ENCODE measurements at regions of chr19 and their contacts with region 1.

Region 1: DNA sequence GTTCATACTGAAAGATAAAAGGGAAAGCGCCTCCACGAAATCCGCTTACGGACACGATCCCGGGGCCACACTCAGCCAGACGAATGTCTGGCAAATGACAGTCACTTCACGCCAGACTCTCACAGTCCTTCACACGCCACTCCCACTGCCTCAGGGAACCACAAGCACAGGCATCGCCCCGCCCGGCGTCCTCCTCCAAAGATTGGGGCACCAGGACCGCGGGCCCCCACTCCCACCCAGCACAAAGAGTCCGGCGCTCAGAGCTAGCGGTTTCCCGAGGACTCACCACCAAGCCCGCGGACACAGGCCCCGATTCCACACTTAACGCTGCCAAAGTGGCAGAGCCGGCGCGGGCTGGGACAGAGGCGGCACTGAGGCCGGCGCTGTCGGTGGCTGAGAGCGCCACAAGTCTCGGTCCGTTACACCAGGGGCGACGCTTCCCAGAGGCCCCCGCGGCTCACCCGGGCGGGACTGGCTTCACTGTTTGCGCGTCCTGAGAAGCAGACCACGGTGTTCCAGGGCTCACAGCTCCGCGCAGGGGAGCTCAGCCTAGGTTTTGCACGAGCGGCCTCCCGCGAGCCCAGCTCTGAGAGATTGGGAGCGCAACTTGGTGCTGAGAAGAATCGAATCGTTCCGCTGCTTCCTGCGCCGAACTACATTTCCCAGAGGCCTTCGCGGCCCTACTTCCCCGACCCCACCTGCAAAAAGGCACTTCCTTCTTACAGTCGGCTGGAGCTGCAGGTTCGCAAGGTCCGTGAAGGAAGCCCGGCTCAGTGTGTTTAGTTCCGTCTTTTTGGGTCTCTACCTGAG is at the start of gene ZNF569:
- DNase-seq: peak; percentile 86 to 89
- ATAC-seq: peak; percentile 91 to 92
- H3K4me3 ChIP-seq: peak within 1 kb of the TSS; percentile 87 to 90 (median 88)
- H3K27ac ChIP-seq: peak within 1 kb of the TSS; percentile 84 to 92 (median 88)
- H3K4me1 ChIP-seq: peaks cover 14 to 16% of the 10 kb centered on the region in 2 donors
- H3K27me3 ChIP-seq: no peaks in the 10 kb centered on the region
- CTCF ChIP-seq: peak in 1 of 5 experiments; percentile 16
- POLR2A ChIP-seq: peak; percentile 20 to 28
- total RNA-seq, gene ZNF569: 3.4 to 9.2 (median 4.4) TPM

Region 2: GRCh38 chr19:36528194-36528920 is 938.6 kb before region 1 on chr19 and contains the start of gene ZNF260:
- in situ Hi-C with region 1: no loop called
- intact Hi-C with region 1: loop called (anchors 2 kb)
- DNase-seq: peak; percentile 96
- ATAC-seq: peak; percentile 99
- H3K4me3 ChIP-seq: peak within 1 kb of the TSS; percentile 71 to 83 (median 80)
- H3K27ac ChIP-seq: peak within 1 kb of the TSS; percentile 83 to 94 (median 90)
- H3K4me1 ChIP-seq: peaks cover 16 to 17% of the 10 kb centered on the region in 2 donors
- H3K27me3 ChIP-seq: no peaks in the 10 kb centered on the region
- CTCF ChIP-seq: no peak
- POLR2A ChIP-seq: peak; percentile 43 to 56
- total RNA-seq, gene ZNF260: 1.3 to 16.3 (median 3.2) TPM

Region 3: GRCh38 chr19:36850559-36851442 is 616.2 kb before region 1 on chr19 and contains the start of gene ZNF345:
- in situ Hi-C with region 1: no loop called
- intact Hi-C with region 1: loop called (anchors 1 kb)
- DNase-seq: peak; percentile 85 to 87
- ATAC-seq: peak; percentile 98 to 99
- H3K4me3 ChIP-seq: peak within 1 kb of the TSS; percentile 87 to 95 (median 92)
- H3K27ac ChIP-seq: peak within 1 kb of the TSS; percentile 87 to 98 (median 94)
- H3K4me1 ChIP-seq: peaks cover 11 to 14% of the 10 kb centered on the region in 2 donors
- H3K27me3 ChIP-seq: no peaks in the 10 kb centered on the region
- CTCF ChIP-seq: no peak
- POLR2A ChIP-seq: peak; percentile 22 to 25
- total RNA-seq, gene ZNF345: 0.36 to 3.9 (median 0.51) TPM

Region 4: DNA sequence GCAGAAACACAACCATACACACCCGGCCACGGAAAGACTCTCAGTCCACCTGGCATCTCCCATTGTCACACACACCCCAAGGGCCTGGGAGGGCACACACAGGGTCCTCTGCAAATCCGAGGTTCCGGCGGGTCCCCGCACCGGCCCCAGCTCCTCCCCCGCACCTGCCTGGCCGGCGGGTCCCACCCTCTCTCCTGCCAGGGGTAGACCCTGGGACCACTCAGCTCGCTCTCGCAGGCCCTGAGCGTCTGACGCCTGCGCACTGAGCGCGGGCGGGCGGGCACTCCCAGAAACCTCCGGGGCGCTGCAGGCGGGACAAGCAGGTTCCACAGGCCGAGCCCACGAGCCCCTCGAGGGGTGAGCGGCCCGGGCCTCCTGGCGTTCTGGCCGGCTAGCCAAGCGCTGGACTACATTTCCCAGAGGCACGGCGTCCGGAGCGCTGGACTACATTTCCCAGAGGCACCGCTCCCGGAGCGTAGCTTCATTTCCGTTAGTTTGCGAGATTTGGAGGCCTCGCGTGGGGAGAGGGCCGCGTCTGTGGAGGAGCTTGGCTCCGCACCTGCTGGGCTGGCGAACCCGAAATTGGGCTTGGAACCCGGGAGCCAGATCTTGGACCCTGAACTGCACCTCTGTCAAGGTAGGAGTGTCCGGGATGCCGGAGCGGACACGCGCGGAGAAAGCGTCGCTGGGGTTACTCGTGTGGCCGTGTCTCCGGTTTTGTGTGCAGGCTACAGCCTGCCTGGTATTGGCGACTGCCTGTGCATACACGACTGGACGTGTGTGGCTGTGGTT is 388.9 kb before region 1 on chr19 and contains the start of gene ZNF420:
- in situ Hi-C with region 1: no loop called
- intact Hi-C with region 1: loop called (anchors 2 kb)
- DNase-seq: peak; percentile 86 to 92
- ATAC-seq: peak; percentile 98 to 99
- H3K4me3 ChIP-seq: peak within 1 kb of the TSS; percentile 82 to 98 (median 93)
- H3K27ac ChIP-seq: peak within 1 kb of the TSS; percentile 84 to 92 (median 89)
- H3K4me1 ChIP-seq: peaks cover 8 to 11% of the 10 kb centered on the region in 2 donors
- H3K27me3 ChIP-seq: no peaks in the 10 kb centered on the region
- CTCF ChIP-seq: no peak
- POLR2A ChIP-seq: peak in 1 of 2 donors; percentile 47
- total RNA-seq, gene ZNF420: 3.0 to 15.4 (median 3.7) TPM

Region 5: DNA sequence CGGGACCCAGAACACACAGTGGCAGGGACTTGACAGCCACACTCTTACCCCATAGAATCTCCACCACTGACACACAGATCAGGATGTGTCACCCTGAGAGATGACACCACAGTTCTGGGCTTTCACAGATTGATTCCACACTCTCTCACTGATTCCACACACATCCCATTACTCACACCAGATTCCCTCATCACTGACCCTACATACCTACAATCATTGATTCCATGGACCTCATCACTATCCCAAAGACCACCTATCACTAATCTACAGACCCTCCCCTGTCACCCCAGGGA is 153.7 kb before region 1 on chr19:
- in situ Hi-C with region 1: no loop called
- intact Hi-C with region 1: loop called (anchors 1 kb)
- DNase-seq: no peak
- ATAC-seq: no peak
- H3K4me3 ChIP-seq: peak overlapping the region in 1 of 4 donors; percentile 47
- H3K27ac ChIP-seq: peak overlapping the region in 1 of 4 donors; percentile 18
- H3K4me1 ChIP-seq: peaks cover 0 to 5% of the 10 kb centered on the region in 2 donors
- H3K27me3 ChIP-seq: peaks cover 0 to 10% (median 0%) of the 10 kb centered on the region in 3 donors
- CTCF ChIP-seq: no peak
- POLR2A ChIP-seq: no peak

Region 6: GRCh38 chr19:37506387-37507166 is 39.6 kb after region 1 on chr19 and contains the start of gene ZNF793:
- in situ Hi-C with region 1: no loop called
- intact Hi-C with region 1: loop called (anchors 2 kb)
- DNase-seq: peak; percentile 26 to 58
- ATAC-seq: peak; percentile 87 to 92
- H3K4me3 ChIP-seq: peak within 1 kb of the TSS; percentile 59 to 78 (median 76)
- H3K27ac ChIP-seq: peak within 1 kb of the TSS; percentile 78 to 85 (median 82)
- H3K4me1 ChIP-seq: peaks cover 0 to 4% of the 10 kb centered on the region in 2 donors
- H3K27me3 ChIP-seq: no peaks in the 10 kb centered on the region
- CTCF ChIP-seq: peak in 1 of 5 experiments; percentile 28
- POLR2A ChIP-seq: peak in 1 of 2 donors; percentile 7
- total RNA-seq, gene ZNF793: 0.19 to 1.2 (median 0.76) TPM

Region 7: GRCh38 chr19:37779127-37780005 is 312.4 kb after region 1 on chr19 and contains the start of gene ZNF573:
- in situ Hi-C with region 1: no loop called
- intact Hi-C with region 1: loop called (anchors 1 kb)
- DNase-seq: peak; percentile 73 to 78
- ATAC-seq: peak; percentile 99
- H3K4me3 ChIP-seq: peak within 1 kb of the TSS; percentile 72 to 99 (median 84)
- H3K27ac ChIP-seq: peak within 1 kb of the TSS; percentile 83 to 89 (median 88)
- H3K4me1 ChIP-seq: peaks cover 0 to 13% of the 10 kb centered on the region in 2 donors
- H3K27me3 ChIP-seq: no peaks in the 10 kb centered on the region
- CTCF ChIP-seq: peak in 1 of 5 experiments; percentile 18
- POLR2A ChIP-seq: peak; percentile 43 to 65
- total RNA-seq, gene ZNF573: 2.6 to 12.8 (median 5.6) TPM